ENCODE measurements at regions of chr12 and their contacts with region 1.

Region 1: GRCh38 chr12:6904280-6905278 is at the start of gene LRRC23:
- DNase-seq: peak; percentile 99
- H3K4me3 Mint-ChIP-seq: no peak within 1 kb of the TSS
- H3K27ac Mint-ChIP-seq: no peak within 1 kb of the TSS
- H3K4me1 Mint-ChIP-seq: peaks cover 2% of the 10 kb centered on the region
- H3K27me3 Mint-ChIP-seq: no peaks in the 10 kb centered on the region
- total RNA-seq, gene LRRC23: 5.7 to 6.1 TPM

Region 2: GRCh38 chr12:6890789-6891645 is 13.6 kb before region 1 on chr12:
- CTCF ChIA-PET with region 1: interaction called, 34 read pairs
- POLR2A ChIA-PET with region 1: interaction called, 53 read pairs
- DNase-seq: peak; percentile 99
- H3K4me3 Mint-ChIP-seq: peak overlapping the region; percentile 79
- H3K27ac Mint-ChIP-seq: peak overlapping the region; percentile 93
- H3K4me1 Mint-ChIP-seq: peaks cover 38% of the 10 kb centered on the region
- H3K27me3 Mint-ChIP-seq: no peaks in the 10 kb centered on the region

Region 3: GRCh38 chr12:6978609-6979011 is 74.0 kb after region 1 on chr12:
- CTCF ChIA-PET with region 1: no interaction called
- POLR2A ChIA-PET with region 1: no interaction called
- DNase-seq: no peak
- H3K4me3 Mint-ChIP-seq: no peak overlapping the region
- H3K27ac Mint-ChIP-seq: no peak overlapping the region
- H3K4me1 Mint-ChIP-seq: peaks cover 18% of the 10 kb centered on the region
- H3K27me3 Mint-ChIP-seq: no peaks in the 10 kb centered on the region

Region 4: GRCh38 chr12:7018350-7019042 is 113.9 kb after region 1 on chr12 and contains the start of gene LPCAT3:
- CTCF ChIA-PET with region 1: no interaction called
- POLR2A ChIA-PET with region 1: no interaction called
- DNase-seq: peak; percentile 97
- H3K4me3 Mint-ChIP-seq: peak within 1 kb of the TSS; percentile 84
- H3K27ac Mint-ChIP-seq: peak within 1 kb of the TSS; percentile 81
- H3K4me1 Mint-ChIP-seq: peaks cover 30% of the 10 kb centered on the region
- H3K27me3 Mint-ChIP-seq: no peaks in the 10 kb centered on the region
- total RNA-seq, gene LPCAT3: 34.6 to 37.0 TPM

Region 5: GRCh38 chr12:7047306-7047705 is 142.7 kb after region 1 on chr12:
- CTCF ChIA-PET with region 1: no interaction called
- POLR2A ChIA-PET with region 1: no interaction called
- DNase-seq: no peak
- H3K4me3 Mint-ChIP-seq: peak overlapping the region; percentile 6
- H3K27ac Mint-ChIP-seq: peak overlapping the region; percentile 64
- H3K4me1 Mint-ChIP-seq: peaks cover 27% of the 10 kb centered on the region
- H3K27me3 Mint-ChIP-seq: peaks cover 15% of the 10 kb centered on the region

Region 6: DNA sequence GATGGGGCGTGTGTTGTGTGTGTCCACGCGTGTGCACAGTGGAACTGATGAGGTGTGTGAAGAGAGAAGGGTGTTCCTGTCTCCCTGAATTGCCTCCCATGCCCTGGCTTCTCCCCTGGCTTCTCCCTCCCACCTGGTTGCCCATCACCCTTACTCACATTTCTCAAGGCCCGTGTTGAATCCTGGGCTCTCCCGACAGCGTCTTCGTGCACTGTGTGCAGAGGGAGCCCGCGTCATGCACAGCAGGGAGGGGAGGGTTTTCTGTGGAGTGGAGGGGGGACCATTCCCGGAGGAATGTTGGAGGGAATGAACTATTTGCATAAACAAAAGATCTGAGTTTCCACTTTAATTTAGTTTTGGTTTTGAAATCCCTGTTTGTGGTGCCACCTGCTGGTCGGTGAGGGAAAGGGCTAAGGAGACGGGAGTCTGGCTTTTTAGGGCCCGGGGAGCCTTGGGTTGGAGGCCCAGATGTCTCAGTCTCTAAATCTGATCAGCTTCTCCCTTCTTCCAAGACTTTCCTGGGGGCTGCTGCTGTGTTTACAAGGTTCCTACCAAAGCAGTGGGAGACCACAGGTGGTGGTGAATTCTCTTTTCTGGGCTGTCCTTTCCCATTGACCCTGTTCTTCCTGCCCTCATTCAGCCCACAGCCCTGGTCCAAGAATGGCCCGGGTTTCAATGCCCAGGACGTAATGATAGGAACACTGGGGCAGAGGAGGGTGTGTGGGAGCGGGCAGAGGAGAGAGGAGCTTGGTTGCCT is 187.8 kb after region 1 on chr12 and contains the start of gene C1R:
- CTCF ChIA-PET with region 1: no interaction called
- POLR2A ChIA-PET with region 1: no interaction called
- DNase-seq: peak; percentile 75
- H3K4me3 Mint-ChIP-seq: peak within 1 kb of the TSS; percentile 71
- H3K27ac Mint-ChIP-seq: no peak within 1 kb of the TSS
- H3K4me1 Mint-ChIP-seq: peaks cover 8% of the 10 kb centered on the region
- H3K27me3 Mint-ChIP-seq: peaks cover 6% of the 10 kb centered on the region
- total RNA-seq, gene C1R: 2.7 to 3.8 TPM